ENCODE measurements at regions of chr4 and their contacts with region 1.

Region 1: GRCh38 chr4:674172-675035 is at the starts of genes ATP5ME and MYL5:
- DNase-seq: peak; percentile 99
- ATAC-seq: peak; percentile 81
- H3K4me3 Mint-ChIP-seq: peak within 1 kb of the TSS; percentile 88
- H3K27ac Mint-ChIP-seq: peak within 1 kb of the TSS; percentile 75
- H3K4me1 Mint-ChIP-seq: peaks cover 34% of the 10 kb centered on the region
- H3K27me3 Mint-ChIP-seq: no peaks in the 10 kb centered on the region
- CTCF ChIP-seq: peak; percentile 46
- total RNA-seq, gene ATP5ME: 152 and 193 TPM in 2 replicates
- total RNA-seq, gene MYL5: 21.9 and 24.6 TPM in 2 replicates

Region 2: DNA sequence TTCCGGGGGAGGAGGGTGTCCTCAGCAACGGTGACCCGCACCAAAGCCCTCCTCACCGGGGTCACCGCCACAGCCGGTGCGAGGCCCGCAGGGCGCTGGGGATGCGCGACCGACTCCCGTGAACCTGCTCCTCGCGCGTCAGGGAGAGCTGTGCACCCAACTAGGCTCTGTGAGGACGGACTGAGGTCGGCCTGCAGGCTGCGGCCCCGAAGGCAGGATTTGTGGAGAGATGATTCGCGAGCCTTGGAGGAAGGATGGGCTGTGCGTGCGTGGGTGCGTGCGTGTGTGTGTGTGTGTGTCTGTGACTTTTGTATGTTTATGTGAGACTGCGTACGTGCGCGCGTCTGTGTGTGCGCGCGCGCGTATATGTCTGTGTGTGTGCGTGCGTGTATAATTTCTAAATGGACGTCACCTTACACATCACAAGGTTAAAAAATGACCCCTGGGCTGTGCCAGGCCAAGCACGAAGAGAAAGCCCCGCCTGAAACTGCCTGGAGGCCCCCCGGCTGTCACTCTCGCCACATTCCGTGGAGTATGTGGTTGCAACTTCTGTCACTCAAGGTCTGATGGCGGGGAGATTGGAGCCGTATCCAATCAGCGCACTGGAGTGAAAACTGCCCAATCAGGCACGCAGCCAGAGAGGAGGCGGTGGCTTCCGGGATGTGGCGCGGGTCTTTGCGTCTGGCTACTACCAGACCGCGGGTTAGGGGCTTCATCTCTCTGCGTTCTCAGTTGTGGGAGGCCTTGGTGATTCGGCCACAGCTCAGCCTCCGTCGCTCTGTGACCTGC is 337.1 kb before region 1 on chr4 and contains the start of gene ZNF141:
- CTCF ChIA-PET with region 1: no interaction called
- POLR2A ChIA-PET with region 1: interaction called, 9 read pairs
- intact Hi-C with region 1: loop called (anchors 1 kb)
- DNase-seq: peak; percentile 78
- ATAC-seq: peak; percentile 92
- H3K4me3 Mint-ChIP-seq: peak within 1 kb of the TSS; percentile 100
- H3K27ac Mint-ChIP-seq: peak within 1 kb of the TSS; percentile 99
- H3K4me1 Mint-ChIP-seq: peaks cover 38% of the 10 kb centered on the region
- H3K27me3 Mint-ChIP-seq: no peaks in the 10 kb centered on the region
- CTCF ChIP-seq: no peak
- total RNA-seq, gene ZNF141: 36.9 and 47.8 TPM in 2 replicates

Region 3: GRCh38 chr4:498328-498904 is 176.0 kb before region 1 on chr4:
- CTCF ChIA-PET with region 1: no interaction called
- POLR2A ChIA-PET with region 1: interaction called, 12 read pairs
- intact Hi-C with region 1: loop called (anchors 1 kb)
- DNase-seq: no peak
- ATAC-seq: peak; percentile 25
- H3K4me3 Mint-ChIP-seq: peak overlapping the region; percentile 93
- H3K27ac Mint-ChIP-seq: peak overlapping the region; percentile 95
- H3K4me1 Mint-ChIP-seq: peaks cover 32% of the 10 kb centered on the region
- H3K27me3 Mint-ChIP-seq: no peaks in the 10 kb centered on the region
- CTCF ChIP-seq: no peak

Region 4: DNA sequence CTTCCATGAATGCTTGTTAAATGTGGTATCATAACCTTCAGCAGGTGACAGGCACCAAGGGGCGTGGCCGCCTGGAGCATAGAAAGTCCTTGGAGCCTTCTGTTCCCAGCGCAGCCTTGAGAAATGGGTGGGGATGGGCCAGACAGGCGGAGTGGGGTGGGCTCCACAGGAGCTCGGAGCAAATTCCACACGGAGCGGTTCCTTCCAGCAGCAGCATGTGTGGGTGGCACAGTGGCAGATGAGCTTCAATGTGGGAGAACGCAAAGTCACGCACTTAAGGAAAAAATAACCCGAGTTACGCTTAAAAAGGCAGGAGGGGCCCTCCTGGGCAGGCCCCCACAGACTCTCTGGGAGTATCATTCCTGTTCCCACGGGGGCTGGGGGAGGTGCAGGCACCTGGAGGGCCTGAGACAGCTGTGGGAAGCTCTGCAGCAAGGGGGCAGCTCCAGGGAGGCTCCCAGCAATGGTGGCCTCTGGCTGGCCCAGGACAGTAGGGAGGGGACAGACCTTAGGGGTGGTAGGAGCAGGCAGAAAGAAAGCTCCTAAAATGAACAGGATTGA is 113.6 kb before region 1 on chr4:
- CTCF ChIA-PET with region 1: no interaction called
- POLR2A ChIA-PET with region 1: no interaction called
- intact Hi-C with region 1: no loop called
- DNase-seq: no peak
- ATAC-seq: no peak
- H3K4me3 Mint-ChIP-seq: no peak overlapping the region
- H3K27ac Mint-ChIP-seq: no peak overlapping the region
- H3K4me1 Mint-ChIP-seq: no peaks in the 10 kb centered on the region
- H3K27me3 Mint-ChIP-seq: no peaks in the 10 kb centered on the region
- CTCF ChIP-seq: no peak

Region 5: DNA sequence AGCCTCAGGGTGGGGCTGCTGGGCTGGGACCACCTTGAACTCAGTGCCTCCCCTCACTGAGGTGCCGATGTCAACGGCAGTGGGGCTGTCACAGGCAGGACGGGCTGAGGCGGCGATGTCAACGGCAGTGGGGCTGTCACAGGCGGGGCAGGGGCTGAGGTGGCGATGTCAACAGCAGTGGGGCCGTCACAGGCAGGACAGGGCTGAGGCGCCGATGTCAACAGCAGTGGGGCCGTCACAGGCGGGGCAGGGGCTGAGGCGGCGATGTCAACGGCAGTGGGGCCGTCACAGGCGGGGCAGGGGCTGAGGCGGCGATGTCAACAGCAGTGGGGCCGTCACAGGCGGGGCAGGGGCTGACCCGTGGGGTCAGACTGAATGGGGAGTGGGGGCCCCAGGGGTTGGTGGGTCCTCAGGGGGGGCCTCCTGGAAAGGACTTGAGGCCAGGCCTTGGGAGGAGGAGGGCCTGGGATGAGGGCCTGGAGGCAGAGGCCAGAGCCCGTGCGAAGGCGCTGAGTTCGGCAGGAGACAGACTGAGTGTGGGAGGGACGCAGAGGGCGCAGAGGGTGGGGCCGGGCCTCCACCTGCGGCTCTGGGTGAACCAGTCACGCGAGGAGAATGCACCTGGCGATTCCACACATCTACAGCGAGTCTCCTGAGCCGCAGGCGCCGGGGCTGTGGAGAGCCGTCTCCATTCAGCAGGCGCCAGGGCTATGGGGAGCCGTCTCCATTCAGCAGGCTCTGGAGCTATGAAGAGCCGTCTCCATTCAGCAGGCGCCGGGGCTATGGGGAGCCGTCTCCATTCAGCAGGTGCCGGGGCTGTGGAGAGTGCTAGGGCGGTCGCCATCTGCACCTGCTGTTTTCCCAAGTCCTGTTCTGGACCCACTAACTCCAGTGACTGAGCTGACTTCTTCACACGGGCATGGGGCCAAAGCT is 23.2 kb before region 1 on chr4:
- CTCF ChIA-PET with region 1: no interaction called
- POLR2A ChIA-PET with region 1: no interaction called
- intact Hi-C with region 1: no loop called
- DNase-seq: no peak
- ATAC-seq: no peak
- H3K4me3 Mint-ChIP-seq: no peak overlapping the region
- H3K27ac Mint-ChIP-seq: no peak overlapping the region
- H3K4me1 Mint-ChIP-seq: no peaks in the 10 kb centered on the region
- H3K27me3 Mint-ChIP-seq: peaks cover 5% of the 10 kb centered on the region
- CTCF ChIP-seq: no peak

Region 6: DNA sequence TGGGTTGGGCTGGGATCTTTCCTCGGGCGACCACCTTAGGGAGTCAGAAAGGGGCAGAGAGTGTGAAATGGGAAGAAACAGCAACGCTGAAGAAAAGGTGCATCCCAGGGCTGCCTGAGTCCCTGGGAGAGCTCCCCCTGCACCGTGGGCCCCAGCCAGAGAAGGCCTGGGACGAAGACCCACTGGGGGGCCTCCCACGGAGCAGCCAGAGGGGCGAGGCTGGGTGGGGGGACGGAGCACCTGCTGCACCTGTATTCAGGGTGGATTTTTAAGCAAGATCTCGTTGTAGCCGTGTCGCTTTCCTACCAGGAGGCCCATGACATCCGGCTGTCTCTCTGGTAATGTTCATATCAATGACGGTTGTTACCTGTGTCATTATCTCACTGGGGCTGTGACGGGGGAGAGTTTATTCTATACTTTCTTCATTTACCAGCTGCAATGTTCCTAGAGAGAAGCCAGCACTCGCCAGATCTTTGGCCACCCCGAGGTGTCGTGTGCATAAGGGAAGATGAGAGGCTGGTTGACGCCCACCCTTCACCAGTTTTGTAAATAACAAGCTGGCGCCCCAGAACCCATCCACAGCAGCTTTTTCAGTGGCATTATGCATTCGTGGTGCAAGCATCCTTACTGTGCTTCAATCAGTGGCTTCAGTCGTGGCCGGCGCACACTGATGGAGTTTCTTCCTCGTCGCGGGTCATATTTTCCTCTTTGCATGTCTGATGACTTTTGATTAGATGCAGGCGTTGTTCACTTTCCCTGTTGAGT is 25.6 kb after region 1 on chr4:
- CTCF ChIA-PET with region 1: interaction called, 3 read pairs
- POLR2A ChIA-PET with region 1: interaction called, 48 read pairs
- intact Hi-C with region 1: loop called (anchors 1 kb)
- DNase-seq: no peak
- ATAC-seq: no peak
- H3K4me3 Mint-ChIP-seq: peak overlapping the region; percentile 76
- H3K27ac Mint-ChIP-seq: peak overlapping the region; percentile 94
- H3K4me1 Mint-ChIP-seq: peaks cover 27% of the 10 kb centered on the region
- H3K27me3 Mint-ChIP-seq: no peaks in the 10 kb centered on the region
- CTCF ChIP-seq: no peak

Region 7: GRCh38 chr4:781493-782216 is 107.3 kb after region 1 on chr4:
- CTCF ChIA-PET with region 1: no interaction called
- POLR2A ChIA-PET with region 1: interaction called, 17 read pairs
- intact Hi-C with region 1: loop called (anchors 1 kb)
- DNase-seq: peak; percentile 97
- ATAC-seq: peak; percentile 93
- H3K4me3 Mint-ChIP-seq: peak overlapping the region; percentile 91
- H3K27ac Mint-ChIP-seq: peak overlapping the region; percentile 87
- H3K4me1 Mint-ChIP-seq: peaks cover 47% of the 10 kb centered on the region
- H3K27me3 Mint-ChIP-seq: peaks cover 18% of the 10 kb centered on the region
- CTCF ChIP-seq: no peak

Region 8: GRCh38 chr4:808860-809570 is 134.6 kb after region 1 on chr4:
- CTCF ChIA-PET with region 1: no interaction called
- POLR2A ChIA-PET with region 1: no interaction called
- intact Hi-C with region 1: no loop called
- DNase-seq: no peak
- ATAC-seq: no peak
- H3K4me3 Mint-ChIP-seq: no peak overlapping the region
- H3K27ac Mint-ChIP-seq: no peak overlapping the region
- H3K4me1 Mint-ChIP-seq: no peaks in the 10 kb centered on the region
- H3K27me3 Mint-ChIP-seq: peaks cover 26% of the 10 kb centered on the region
- CTCF ChIP-seq: no peak

Region 9: DNA sequence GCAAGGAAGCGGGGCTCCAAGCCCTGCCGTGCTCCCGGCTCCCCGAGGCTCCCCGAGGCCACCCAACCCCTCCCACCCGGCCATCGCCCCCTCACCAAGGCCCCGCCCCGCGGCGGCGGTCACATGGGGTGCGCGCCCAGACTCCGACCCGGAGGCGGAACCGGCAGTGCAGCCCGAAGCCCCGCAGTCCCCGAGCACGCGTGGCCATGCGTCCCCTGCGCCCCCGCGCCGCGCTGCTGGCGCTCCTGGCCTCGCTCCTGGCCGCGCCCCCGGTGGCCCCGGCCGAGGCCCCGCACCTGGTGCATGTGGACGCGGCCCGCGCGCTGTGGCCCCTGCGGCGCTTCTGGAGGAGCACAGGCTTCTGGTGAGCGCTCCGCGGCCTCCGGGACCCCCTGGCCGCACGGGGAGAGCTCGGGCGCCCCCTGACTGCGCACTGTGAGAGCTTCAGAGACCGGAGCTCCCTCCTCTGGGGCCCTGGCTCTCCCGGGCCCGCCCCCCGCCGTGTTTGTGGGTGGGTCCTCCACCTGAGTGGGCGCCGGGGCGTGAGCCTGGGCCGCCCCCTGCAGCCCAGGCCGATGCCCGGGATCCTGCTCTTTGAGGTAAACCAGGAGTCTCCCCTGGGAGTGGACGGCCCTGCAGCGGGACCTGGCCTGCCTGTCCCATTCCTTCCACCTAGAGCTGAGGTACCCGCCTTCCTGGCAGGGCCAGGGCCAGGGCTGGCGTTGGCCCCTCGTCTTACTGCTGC is 312.6 kb after region 1 on chr4 and contains the start of gene IDUA:
- CTCF ChIA-PET with region 1: interaction called, 3 read pairs
- POLR2A ChIA-PET with region 1: no interaction called
- intact Hi-C with region 1: loop called (anchors 2 kb)
- DNase-seq: peak; percentile 86
- ATAC-seq: peak; percentile 87
- H3K4me3 Mint-ChIP-seq: peak within 1 kb of the TSS; percentile 83
- H3K27ac Mint-ChIP-seq: peak within 1 kb of the TSS; percentile 76
- H3K4me1 Mint-ChIP-seq: peaks cover 19% of the 10 kb centered on the region
- H3K27me3 Mint-ChIP-seq: no peaks in the 10 kb centered on the region
- CTCF ChIP-seq: no peak
- total RNA-seq, gene IDUA: 24.7 and 32.9 TPM in 2 replicates

Measured in activated B cell treated with CpG ODN at 0.5 μM for 24 hours (primary cell).